Mucosa of descending colon (tissue), 3 donors: ENCODE measurements at regions of chr4 and their contacts with region 1.

Region 1: GRCh38 chr4:158033416-158034120 is 139.3 kb downstream of the GASK1B start:
- DNase-seq: no peak
- ATAC-seq: peak; percentile 43
- H3K4me3 ChIP-seq: no peak overlapping the region
- H3K4me1 ChIP-seq: no peaks in the 10 kb centered on the region
- CTCF ChIP-seq: no peak

Region 2: DNA sequence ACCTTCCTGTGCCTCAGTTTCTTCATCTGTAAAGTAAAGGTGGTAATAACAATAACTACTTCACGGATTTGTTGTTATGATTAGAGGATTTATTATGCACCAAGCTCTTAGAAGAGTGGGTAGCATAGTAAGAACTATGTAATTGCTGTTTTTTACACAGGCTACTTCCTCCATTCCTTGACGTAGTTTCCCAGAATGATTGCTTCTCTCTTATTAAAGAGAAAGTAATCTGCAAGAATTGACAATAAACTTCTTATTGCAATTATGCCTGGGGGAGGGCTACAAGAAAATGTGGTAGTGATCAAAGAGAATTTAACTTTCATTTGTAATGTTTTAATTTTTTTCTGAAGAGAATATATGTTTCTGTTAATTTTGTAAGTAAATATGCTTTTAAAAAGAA is 99.4 kb before region 1 on chr4:
- intact Hi-C with region 1: no loop called
- DNase-seq: no peak
- ATAC-seq: no peak
- H3K4me3 ChIP-seq: no peak overlapping the region
- H3K4me1 ChIP-seq: no peaks in the 10 kb centered on the region
- CTCF ChIP-seq: no peak

Region 3: DNA sequence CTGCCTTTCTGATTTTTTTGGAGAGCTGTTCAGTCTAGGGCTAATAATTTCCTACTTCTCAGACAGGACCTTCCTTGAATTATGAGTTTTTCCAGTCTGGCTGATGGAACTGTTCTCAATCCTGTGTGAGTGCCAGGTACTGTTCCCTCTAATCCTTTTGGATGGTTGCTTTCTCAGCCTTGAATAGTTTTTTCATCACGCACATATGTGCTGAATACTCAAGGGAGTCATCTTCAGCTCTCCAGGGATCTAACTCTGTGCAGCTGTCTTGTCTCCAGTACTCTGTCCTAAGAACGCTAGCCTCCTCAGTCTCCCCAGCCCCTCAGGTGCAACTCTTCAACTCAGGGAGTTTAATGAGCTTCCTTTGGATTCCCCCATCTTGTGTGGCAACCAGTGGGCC is 46.1 kb after region 1 on chr4:
- intact Hi-C with region 1: loop called in 1 of 2 experiments (anchors 2 kb)
- DNase-seq: no peak
- ATAC-seq: no peak
- H3K4me3 ChIP-seq: no peak overlapping the region
- H3K4me1 ChIP-seq: no peaks in the 10 kb centered on the region
- CTCF ChIP-seq: no peak